Motor neuron (in vitro differentiated cells): ENCODE measurements at regions of chr3 and their contacts with region 1.

Region 1: GRCh38 chr3:24793896-24794295 is 299.2 kb upstream of the THRB start:
- ATAC-seq: no peak
- H3K4me3 ChIP-seq: no peak overlapping the region
- H3K27ac ChIP-seq: no peak overlapping the region
- H3K4me1 ChIP-seq: no peaks in the 10 kb centered on the region

Region 2: DNA sequence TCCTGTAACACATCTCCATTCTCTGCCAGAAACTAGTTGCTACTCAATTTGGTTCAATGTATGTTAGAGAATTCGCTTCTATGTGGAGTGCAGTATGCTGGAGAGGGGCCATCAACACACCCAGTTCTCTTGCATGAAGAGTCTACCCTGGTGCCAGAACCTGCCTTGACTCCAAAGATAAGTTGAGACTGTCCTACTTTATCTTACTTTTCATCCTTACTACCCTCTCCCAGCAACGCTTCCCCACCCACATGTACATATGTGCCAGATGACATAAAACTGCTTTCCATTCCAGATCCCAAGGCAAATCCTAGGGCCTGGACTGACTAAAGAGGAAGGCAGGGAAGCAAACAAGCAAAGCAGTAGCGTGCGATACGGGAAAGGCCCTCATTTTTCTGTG is 143.3 kb after region 1 on chr3:
- in situ Hi-C with region 1: no loop called
- ATAC-seq: peak in 2 of 8 experiments; percentile 47 to 81
- H3K4me3 ChIP-seq: no peak overlapping the region
- H3K27ac ChIP-seq: no peak overlapping the region
- H3K4me1 ChIP-seq: peaks cover 0 to 4% of the 10 kb centered on the region in 2 donors

Region 3: GRCh38 chr3:25573386-25574171 is 779.7 kb after region 1 on chr3:
- in situ Hi-C with region 1: loop called in 3 of 9 experiments (anchors 25 kb)
- ATAC-seq: no peak
- H3K4me3 ChIP-seq: no peak overlapping the region
- H3K27ac ChIP-seq: no peak overlapping the region
- H3K4me1 ChIP-seq: no peaks in the 10 kb centered on the region